ENCODE measurements at regions of chr2 and their contacts with region 1.

Region 1: DNA sequence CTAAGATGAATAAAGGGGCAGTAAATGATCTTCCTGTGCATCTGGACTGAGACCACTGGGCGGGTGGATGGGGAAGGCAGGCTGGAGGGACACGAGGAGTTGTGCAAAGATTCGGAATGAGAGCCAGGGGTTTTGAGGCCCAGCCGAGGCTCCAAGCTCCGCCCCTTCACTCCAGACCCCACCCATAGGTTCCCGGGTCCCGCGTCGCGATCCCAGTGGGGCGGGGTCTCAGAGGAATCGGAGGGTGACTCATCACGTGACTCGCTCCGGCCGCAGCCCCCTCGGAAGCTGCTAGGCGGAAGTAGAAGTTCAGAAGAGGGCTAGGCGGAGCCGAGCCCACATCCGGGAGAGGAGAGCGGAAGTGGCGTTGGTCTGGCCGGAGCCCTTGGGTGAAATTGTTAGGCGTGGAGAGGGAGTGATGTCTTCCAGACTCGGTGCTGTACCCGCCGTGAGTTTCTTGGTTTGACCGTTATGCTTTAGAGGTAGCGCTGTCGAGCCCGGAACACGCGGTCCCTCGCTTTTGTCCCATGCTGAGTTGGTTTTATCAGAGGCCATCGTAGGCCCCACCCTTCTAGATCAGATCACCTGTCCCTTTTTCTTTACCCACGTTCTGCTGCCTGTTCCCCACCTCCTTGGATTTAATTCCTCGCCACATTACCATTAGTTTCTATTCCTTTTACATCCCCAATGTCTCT is at the start of gene ZNF512:
- DNase-seq: peak; percentile 79
- H3K4me3 Mint-ChIP-seq: peak within 1 kb of the TSS; percentile 98
- H3K27ac Mint-ChIP-seq: peak within 1 kb of the TSS; percentile 93
- H3K4me1 Mint-ChIP-seq: peaks cover 42% of the 10 kb centered on the region
- H3K27me3 Mint-ChIP-seq: peaks cover 4% of the 10 kb centered on the region
- total RNA-seq, gene ZNF512: 23.9 and 25.1 TPM in 2 replicates

Region 2: GRCh38 chr2:27489498-27490397 is 93.1 kb before region 1 on chr2 and contains the start of gene IFT172:
- intact Hi-C with region 1: loop called (anchors 10 kb)
- DNase-seq: peak; percentile 99
- H3K4me3 Mint-ChIP-seq: peak within 1 kb of the TSS; percentile 86
- H3K27ac Mint-ChIP-seq: peak within 1 kb of the TSS; percentile 74
- H3K4me1 Mint-ChIP-seq: peaks cover 19% of the 10 kb centered on the region
- H3K27me3 Mint-ChIP-seq: peaks cover 13% of the 10 kb centered on the region
- total RNA-seq, gene IFT172: 16.4 and 18.8 TPM in 2 replicates

Region 3: DNA sequence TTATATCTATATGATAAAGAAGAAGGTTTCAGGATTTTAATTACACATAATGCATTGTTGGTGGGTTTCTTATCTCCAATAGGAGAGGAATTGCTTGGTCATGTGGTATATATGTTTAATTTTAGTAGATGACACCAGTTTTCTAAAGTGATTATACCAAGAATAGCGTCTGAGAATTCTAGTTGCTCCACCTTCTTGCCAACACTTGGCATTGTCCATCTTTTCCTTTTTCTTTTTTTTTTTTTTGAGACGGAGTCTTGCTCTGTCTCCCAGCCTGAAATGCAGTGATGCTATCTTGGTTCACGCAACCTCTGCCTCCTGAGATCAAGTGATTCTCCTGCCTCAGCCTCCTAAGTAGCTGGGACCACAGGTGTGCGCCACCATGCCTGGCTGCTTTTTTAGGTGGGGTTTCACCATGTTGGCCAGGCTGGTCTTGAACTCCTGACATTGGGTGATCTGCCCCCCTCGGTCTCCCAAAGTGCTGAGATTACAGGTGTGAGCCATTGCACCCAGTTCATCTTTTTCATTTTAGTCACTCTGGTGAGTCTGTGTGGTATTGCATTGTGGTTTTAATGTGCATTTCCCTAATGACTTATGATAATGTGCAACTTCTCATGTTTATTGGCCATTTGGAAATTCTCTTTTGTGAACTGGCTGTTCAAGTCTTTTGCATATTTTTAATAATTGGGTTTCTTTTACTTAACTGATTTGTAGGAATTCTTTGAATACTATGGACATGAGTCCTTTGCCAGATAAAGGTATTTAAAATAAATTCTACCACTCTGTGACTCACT is 37.3 kb before region 1 on chr2:
- intact Hi-C with region 1: no loop called
- DNase-seq: no peak
- H3K4me3 Mint-ChIP-seq: no peak overlapping the region
- H3K27ac Mint-ChIP-seq: no peak overlapping the region
- H3K4me1 Mint-ChIP-seq: no peaks in the 10 kb centered on the region
- H3K27me3 Mint-ChIP-seq: peaks cover 5% of the 10 kb centered on the region

Region 4: DNA sequence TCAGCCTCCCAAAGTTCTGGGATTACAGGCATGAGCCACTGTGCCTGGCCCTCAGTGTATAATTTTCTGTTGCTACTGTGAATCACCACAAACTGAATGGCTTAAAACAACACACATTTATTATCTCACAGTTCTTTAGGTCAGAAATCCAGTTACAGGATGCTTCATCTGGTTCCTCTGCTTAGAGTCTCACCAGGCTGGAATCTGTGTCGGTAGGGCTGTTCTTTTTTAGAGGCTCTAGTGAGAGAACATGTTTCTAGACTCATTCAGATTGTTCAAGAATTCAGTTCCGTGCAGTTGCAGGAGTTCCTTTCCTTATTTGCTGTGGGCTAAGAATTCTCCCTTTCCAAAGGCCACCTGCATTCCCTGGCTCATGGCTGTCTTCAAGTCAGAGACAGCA is 23.8 kb after region 1 on chr2:
- intact Hi-C with region 1: no loop called
- DNase-seq: no peak
- H3K4me3 Mint-ChIP-seq: no peak overlapping the region
- H3K27ac Mint-ChIP-seq: no peak overlapping the region
- H3K4me1 Mint-ChIP-seq: peaks cover 2% of the 10 kb centered on the region
- H3K27me3 Mint-ChIP-seq: no peaks in the 10 kb centered on the region

Region 5: DNA sequence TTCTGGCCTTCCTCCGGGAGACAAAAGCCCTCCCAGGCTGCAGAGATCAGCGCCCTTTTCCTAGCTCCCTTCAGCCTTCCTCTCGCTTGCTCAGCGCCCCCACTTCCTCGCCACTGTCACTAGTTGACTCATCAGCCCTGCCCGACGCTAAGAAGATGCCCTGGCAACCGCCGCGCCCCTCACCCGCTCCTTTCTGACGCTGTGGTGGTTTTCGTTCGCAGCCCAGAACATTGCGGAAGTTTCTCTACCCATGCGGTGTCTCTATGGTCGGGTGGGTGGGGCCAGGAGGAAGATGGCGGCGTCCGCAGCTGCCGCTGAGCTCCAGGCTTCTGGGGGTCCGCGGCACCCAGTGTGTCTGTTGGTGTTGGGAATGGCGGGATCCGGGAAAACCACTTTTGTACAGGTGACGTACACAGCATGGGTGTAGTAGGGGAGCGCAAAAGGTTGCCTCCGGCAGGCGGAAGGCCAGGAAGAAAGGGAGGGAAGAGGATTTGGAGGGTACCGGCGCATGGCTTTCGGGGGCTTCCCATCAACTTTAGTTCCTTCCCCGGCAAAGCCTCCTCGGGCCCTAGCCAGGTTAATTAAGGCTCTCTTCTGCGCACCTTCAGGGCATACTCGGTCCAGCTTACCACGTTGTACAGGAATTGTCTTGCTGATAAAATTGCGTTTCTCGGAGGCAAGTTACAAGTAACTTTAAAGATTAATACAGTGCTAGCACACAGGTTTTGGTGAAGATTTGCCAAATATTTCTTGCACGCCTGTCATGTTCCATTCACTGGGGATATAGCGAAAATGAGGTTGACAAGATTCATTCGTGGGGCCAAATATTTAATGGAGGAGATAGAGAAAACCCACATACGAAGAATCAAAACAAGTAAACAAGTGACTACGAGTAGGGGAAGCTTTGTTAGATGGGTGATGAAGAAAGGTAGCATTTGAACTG is 46.2 kb after region 1 on chr2 and contains the starts of genes CCDC121 and GPN1:
- intact Hi-C with region 1: loop called (anchors 2 kb)
- DNase-seq: peak; percentile 95
- H3K4me3 Mint-ChIP-seq: no peak within 1 kb of the TSS
- H3K27ac Mint-ChIP-seq: peak within 1 kb of the TSS; percentile 38
- H3K4me1 Mint-ChIP-seq: peaks cover 29% of the 10 kb centered on the region
- H3K27me3 Mint-ChIP-seq: no peaks in the 10 kb centered on the region
- total RNA-seq, gene CCDC121: 0.57 and 0.73 TPM in 2 replicates
- total RNA-seq, gene GPN1: 54.3 and 55.9 TPM in 2 replicates

Region 6: GRCh38 chr2:27638037-27638637 is 55.3 kb after region 1 on chr2:
- intact Hi-C with region 1: loop called (anchors 2 kb)
- DNase-seq: no peak
- H3K4me3 Mint-ChIP-seq: peak overlapping the region; percentile 67
- H3K27ac Mint-ChIP-seq: peak overlapping the region; percentile 97
- H3K4me1 Mint-ChIP-seq: peaks cover 38% of the 10 kb centered on the region
- H3K27me3 Mint-ChIP-seq: no peaks in the 10 kb centered on the region

Region 7: GRCh38 chr2:27683390-27684071 is 100.7 kb after region 1 on chr2:
- intact Hi-C with region 1: loop called (anchors 5 kb)
- DNase-seq: peak; percentile 78
- H3K4me3 Mint-ChIP-seq: no peak overlapping the region
- H3K27ac Mint-ChIP-seq: peak overlapping the region; percentile 77
- H3K4me1 Mint-ChIP-seq: peaks cover 31% of the 10 kb centered on the region
- H3K27me3 Mint-ChIP-seq: no peaks in the 10 kb centered on the region

Region 8: DNA sequence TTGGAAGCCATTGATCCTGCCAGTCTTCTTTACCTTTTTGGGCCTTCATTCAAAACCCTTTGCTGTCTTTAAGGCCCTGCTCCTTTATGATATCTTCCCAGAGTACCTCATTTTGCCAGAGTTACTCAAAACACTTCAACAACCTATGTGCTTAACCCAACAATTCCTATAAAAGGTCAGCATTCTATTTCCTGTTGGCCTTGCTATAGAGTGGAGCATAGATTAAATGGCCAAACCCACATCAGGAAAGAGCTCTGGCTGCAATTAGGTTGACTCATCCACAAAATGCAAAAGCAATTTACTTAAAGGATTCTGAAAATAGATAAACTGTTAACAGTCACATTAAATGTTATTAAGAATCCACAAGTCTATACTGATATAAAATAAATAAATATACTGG is 209.9 kb after region 1 on chr2:
- intact Hi-C with region 1: no loop called
- DNase-seq: no peak
- H3K4me3 Mint-ChIP-seq: no peak overlapping the region
- H3K27ac Mint-ChIP-seq: no peak overlapping the region
- H3K4me1 Mint-ChIP-seq: no peaks in the 10 kb centered on the region
- H3K27me3 Mint-ChIP-seq: no peaks in the 10 kb centered on the region

Region 9: DNA sequence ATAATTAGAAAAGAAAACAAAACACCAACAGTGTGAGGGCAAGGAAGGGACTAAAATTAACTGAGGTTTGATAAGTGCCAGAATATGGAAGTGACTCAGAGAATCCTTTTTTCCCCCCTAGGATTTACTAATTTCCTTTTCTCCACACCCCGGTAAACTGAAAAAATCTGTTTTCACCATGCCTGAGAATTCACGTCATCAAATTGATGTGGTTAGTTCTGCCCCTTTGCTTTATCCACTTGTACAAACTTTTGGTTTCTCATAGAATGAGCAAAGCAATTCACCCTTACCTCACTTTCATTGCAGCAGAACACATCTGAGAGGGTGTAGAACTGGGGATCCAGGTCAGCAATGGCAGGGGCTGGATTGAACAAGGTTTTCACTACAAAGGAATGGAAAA is 249.6 kb after region 1 on chr2:
- intact Hi-C with region 1: no loop called
- DNase-seq: no peak
- H3K4me3 Mint-ChIP-seq: no peak overlapping the region
- H3K27ac Mint-ChIP-seq: no peak overlapping the region
- H3K4me1 Mint-ChIP-seq: no peaks in the 10 kb centered on the region
- H3K27me3 Mint-ChIP-seq: no peaks in the 10 kb centered on the region